Activated naive CD4-positive, alpha-beta T cell treated with anti-CD3 and anti-CD28 coated beads for 36 hours (primary cell): ENCODE measurements at regions of chr21 and their contacts with region 1.

Region 1: DNA sequence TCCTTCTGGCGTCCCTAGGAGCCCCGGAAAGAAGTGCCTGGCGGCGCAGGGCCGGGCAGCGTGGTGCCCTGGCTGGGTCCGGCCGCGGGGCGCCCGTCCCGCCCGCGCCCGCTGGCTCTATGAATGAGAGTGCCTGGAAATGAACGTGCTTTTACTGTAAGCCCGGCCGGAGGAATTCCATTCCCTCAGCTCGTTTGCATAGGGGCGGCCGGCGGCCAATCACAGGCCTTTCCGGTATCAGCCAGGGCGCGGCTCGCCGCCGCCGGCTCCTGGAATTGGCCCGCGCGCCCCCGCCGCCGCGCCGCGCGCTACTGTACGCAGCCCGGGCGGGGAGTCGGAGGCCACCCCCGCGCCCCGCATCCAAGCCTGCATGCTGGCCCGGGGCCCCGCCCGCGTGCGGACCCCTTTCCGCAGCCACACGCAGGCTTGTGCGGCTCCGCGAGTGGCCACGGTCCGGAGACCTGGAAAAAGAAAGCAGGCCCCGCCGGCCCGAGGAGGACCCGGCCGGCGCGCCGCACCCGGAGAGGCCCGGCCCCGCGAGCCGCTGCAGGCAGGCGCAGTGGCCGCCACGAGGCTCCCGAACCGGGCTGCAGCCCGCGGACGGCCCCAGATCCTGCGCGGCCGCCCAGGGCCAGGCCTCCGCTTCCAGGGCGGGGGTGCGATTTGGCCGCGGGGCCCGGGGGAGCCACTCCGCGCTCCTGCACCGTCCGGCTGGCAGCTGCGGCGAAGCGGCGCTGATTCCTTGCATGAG is 160.4 kb downstream of the RUNX1 start:
- DNase-seq: peak; percentile 90
- H3K4me3 Mint-ChIP-seq: peak overlapping the region; percentile 91
- H3K27ac Mint-ChIP-seq: peak overlapping the region; percentile 99
- H3K4me1 Mint-ChIP-seq: peaks cover 30% of the 10 kb centered on the region
- H3K27me3 Mint-ChIP-seq: no peaks in the 10 kb centered on the region

Region 2: GRCh38 chr21:34745557-34746255 is 143.0 kb before region 1 on chr21:
- CTCF ChIA-PET with region 1: interaction called, 9 read pairs
- intact Hi-C with region 1: loop called (anchors 1 kb)
- DNase-seq: peak; percentile 74
- H3K4me3 Mint-ChIP-seq: peak overlapping the region; percentile 47
- H3K27ac Mint-ChIP-seq: peak overlapping the region; percentile 54
- H3K4me1 Mint-ChIP-seq: peaks cover 4% of the 10 kb centered on the region
- H3K27me3 Mint-ChIP-seq: no peaks in the 10 kb centered on the region

Region 3: GRCh38 chr21:34946916-34947534 is 58.3 kb after region 1 on chr21:
- CTCF ChIA-PET with region 1: interaction called, 14 read pairs
- intact Hi-C with region 1: loop called (anchors 1 kb)
- DNase-seq: peak; percentile 44
- H3K4me3 Mint-ChIP-seq: no peak overlapping the region
- H3K27ac Mint-ChIP-seq: peak overlapping the region; percentile 87
- H3K4me1 Mint-ChIP-seq: peaks cover 92% of the 10 kb centered on the region
- H3K27me3 Mint-ChIP-seq: no peaks in the 10 kb centered on the region

Region 4: DNA sequence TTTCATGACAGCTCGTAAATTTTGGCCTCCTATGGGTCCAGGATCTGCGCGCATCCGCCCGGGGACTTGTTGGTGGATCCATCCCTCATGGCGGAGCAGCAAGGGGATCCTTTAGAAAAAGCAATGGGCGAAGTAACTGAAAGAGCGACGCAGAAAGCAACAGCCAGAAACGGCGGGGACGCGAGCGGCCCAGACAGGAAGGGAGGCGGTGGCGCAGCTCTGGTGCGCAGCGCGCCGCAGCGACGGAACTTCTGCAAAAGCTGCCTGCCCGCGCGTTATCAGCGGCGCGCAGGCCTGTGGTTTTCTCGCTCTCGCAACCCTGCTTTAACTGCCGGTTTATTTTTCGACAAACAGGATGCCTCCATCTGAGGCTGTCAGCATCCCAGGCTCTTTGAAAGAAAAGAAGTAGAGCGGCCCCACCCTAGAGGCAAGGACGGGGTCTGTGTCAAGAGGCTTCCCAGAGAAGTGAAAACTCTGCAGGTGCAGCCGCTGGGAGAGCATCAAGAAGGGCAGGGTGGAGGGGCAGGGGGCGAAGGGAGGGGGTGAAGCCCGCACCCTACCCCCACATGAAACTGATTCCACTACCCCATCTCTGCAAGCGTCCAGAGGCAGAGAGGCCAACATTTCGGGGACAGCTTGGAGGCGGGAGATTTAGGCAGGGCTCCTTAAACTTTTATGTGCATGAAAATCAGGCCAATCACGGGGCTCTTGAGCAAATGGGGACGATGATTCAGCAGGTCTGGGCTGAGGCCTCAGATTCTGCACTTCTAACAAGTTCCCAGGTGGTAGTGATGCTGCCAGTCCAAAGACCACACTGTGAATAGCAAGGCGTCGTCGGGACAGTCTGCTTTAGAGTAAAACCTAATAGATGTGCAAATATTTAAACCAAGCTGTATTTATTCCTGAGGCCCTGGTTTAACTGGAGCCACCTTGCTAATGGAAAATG is 138.1 kb after region 1 on chr21:
- CTCF ChIA-PET with region 1: interaction called, 6 read pairs
- intact Hi-C with region 1: loop called (anchors 1 kb)
- DNase-seq: peak; percentile 88
- H3K4me3 Mint-ChIP-seq: peak overlapping the region; percentile 83
- H3K27ac Mint-ChIP-seq: peak overlapping the region; percentile 95
- H3K4me1 Mint-ChIP-seq: peaks cover 86% of the 10 kb centered on the region
- H3K27me3 Mint-ChIP-seq: no peaks in the 10 kb centered on the region

Region 5: DNA sequence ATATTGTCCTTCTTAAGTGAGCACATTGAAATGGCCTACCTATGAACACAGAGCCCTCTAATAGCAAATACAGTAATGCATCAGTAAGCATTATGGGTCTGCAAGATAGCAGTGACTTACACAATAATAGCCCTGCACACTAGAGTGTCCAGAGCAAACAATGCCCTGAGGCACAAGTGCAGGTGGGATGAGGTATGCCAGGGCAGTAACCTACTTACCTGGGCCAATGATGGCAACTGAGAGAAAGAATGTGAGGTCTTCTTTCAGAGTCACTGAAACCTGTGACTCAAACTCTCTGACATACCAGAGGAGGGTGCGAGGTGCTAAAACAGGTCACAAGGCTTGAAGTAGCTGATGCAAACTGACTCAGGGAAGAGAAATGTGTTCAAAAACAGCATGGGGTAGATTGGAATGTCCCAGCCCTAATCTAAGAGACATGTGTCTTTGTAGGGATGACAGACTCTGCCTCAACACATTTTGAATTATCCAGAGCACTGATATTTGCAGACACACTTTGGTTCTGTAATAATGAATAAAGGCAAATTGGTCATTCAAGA is 328.8 kb after region 1 on chr21:
- CTCF ChIA-PET with region 1: no interaction called
- intact Hi-C with region 1: loop called (anchors 5 kb)
- DNase-seq: peak; percentile 82
- H3K4me3 Mint-ChIP-seq: no peak overlapping the region
- H3K27ac Mint-ChIP-seq: peak overlapping the region; percentile 82
- H3K4me1 Mint-ChIP-seq: peaks cover 32% of the 10 kb centered on the region
- H3K27me3 Mint-ChIP-seq: no peaks in the 10 kb centered on the region

Region 6: DNA sequence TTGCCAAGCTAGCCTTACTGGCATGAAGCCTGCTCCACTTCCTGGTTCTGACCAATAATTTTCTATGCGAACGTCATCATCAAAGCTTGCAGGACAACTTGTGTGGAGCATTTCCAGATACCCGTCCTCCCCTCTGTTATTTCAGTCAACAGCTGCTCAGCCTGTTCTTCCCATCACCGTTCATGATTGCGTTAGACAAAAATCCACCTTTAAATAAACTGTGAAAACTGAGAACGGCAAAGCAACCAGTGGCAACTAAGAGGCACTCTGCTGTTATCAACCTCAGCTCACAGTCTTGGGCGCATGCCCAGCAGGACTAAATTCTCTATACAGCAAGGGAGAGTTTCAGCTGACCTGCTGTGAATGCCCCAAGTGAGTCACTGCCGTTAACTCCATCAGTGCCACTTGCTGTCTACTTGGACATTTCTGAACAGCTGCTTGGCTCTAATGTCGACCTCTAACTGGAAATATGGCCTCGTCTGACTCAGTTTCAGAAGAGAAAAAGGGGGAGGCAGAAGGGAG is 367.8 kb after region 1 on chr21:
- CTCF ChIA-PET with region 1: no interaction called
- intact Hi-C with region 1: no loop called
- DNase-seq: no peak
- H3K4me3 Mint-ChIP-seq: no peak overlapping the region
- H3K27ac Mint-ChIP-seq: no peak overlapping the region
- H3K4me1 Mint-ChIP-seq: peaks cover 27% of the 10 kb centered on the region
- H3K27me3 Mint-ChIP-seq: no peaks in the 10 kb centered on the region

Region 7: DNA sequence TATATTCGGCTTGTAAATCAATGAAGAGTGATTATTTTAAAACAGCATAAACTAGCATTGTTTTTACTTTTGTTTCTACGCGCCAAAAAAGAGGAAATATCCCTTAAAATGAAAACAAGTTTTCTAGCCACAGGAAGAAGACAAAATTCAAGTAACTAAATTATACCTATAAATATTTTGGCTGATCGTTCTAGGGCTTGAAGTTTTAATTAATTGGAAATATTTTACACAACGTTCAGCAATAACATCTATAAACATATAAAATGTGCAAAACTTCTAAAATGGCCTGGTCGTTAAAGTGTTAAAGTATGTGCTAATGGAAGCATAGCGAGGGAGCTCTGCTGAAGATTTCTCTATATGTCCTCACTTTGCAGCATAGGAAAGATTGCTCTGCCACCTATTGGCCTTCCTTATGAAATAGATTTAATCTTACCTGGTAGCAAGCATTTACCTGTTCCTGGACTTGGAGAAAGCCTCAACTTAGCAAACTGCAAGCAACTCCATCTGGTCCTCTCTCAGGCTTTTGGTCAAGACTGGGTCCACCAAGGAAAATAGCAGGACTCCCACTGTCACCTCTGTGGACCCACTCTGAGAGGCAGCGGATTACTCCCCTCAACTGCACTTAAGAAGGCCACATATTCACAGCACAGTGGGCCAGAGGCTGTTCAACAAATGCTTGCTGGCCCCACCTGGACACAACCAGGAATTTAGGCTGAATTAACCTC is 511.7 kb after region 1 on chr21:
- CTCF ChIA-PET with region 1: interaction called, 12 read pairs
- intact Hi-C with region 1: loop called (anchors 1 kb)
- DNase-seq: peak; percentile 58
- H3K4me3 Mint-ChIP-seq: peak overlapping the region; percentile 22
- H3K27ac Mint-ChIP-seq: peak overlapping the region; percentile 27
- H3K4me1 Mint-ChIP-seq: peaks cover 24% of the 10 kb centered on the region
- H3K27me3 Mint-ChIP-seq: no peaks in the 10 kb centered on the region